Head of caudate nucleus (tissue), 42 donors: ENCODE measurements at regions of chr1 and their contacts with region 1.

Region 1: GRCh38 chr1:162497723-162498500 is at the start of gene UHMK1:
- DNase-seq: peak; percentile 86 to 97 (median 92)

Region 2: DNA sequence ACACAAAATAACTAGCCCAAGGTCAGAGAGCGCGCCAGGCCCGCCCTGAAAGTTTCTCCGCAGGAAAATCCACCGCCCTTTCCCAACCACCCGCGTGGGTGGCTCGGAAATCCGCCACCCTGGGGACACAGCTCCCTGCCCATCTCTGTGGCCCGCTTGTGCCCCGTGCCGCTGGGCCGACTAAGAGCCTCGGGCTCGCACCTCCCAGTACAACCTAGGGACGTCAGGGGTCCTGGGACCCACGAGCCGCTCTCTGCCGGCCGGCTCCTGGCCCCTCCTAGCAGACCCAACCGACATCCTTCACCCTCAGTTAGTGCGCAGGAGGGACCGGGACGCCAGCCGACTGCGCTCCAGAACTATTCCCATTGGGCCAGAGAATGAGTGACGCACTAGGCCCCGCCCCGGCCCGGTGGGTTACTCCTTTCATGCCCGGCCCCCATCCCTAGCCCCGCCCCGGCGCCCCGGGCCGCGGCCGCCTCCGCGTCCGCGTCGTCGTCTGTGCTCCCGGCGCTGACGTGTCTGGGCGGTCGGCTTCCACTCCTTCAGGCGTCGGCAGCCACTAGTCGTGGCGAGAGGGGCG is 63.2 kb after region 1 on chr1:
- intact Hi-C with region 1: loop called (anchors 5 kb)
- DNase-seq: peak; percentile 95 to 99 (median 98)